ENCODE measurements at regions of chr12 and their contacts with region 1.

Region 1: DNA sequence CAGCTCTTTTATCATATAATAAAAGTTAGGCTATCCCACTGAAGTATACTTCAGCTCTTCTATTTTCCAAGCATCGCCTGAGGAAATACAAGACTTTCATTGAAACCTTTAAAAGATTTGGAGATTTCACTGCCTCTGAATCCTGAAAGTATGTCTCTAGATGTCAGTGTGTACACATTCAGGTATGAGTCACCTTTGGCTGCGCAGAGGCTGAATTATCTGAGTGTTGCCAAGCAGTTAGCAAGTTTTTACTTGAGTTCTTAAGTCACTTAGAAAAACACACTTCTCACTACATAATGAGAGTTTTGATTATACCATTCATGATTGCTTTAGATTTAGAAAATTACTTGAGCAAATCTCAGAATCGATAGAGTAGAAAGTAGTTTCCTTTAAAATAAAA is 210.3 kb downstream of the TMTC2 start:
- DNase-seq: peak in 1 of 3 donors; percentile 48
- ATAC-seq: peak; percentile 91
- H3K4me3 ChIP-seq: no peak overlapping the region
- H3K4me1 ChIP-seq: no peaks in the 10 kb centered on the region
- CTCF ChIP-seq: no peak

Region 2: GRCh38 chr12:82378997-82379396 is 518.0 kb before region 1 on chr12:
- intact Hi-C with region 1: no loop called
- DNase-seq: no peak
- ATAC-seq: no peak
- H3K4me3 ChIP-seq: no peak overlapping the region
- H3K4me1 ChIP-seq: no peaks in the 10 kb centered on the region
- CTCF ChIP-seq: no peak

Region 3: GRCh38 chr12:82685790-82686167 is 211.2 kb before region 1 on chr12:
- intact Hi-C with region 1: loop called in 1 of 2 experiments (anchors 10 kb)
- DNase-seq: peak; percentile 96 to 99 (median 97)
- ATAC-seq: peak; percentile 82
- H3K4me3 ChIP-seq: peak overlapping the region; percentile 86
- H3K4me1 ChIP-seq: peaks cover 11% of the 10 kb centered on the region
- CTCF ChIP-seq: peak; percentile 87